Heart right ventricle (tissue), 16 donors: ENCODE measurements at regions of chr5 and their contacts with region 1.

Region 1: DNA sequence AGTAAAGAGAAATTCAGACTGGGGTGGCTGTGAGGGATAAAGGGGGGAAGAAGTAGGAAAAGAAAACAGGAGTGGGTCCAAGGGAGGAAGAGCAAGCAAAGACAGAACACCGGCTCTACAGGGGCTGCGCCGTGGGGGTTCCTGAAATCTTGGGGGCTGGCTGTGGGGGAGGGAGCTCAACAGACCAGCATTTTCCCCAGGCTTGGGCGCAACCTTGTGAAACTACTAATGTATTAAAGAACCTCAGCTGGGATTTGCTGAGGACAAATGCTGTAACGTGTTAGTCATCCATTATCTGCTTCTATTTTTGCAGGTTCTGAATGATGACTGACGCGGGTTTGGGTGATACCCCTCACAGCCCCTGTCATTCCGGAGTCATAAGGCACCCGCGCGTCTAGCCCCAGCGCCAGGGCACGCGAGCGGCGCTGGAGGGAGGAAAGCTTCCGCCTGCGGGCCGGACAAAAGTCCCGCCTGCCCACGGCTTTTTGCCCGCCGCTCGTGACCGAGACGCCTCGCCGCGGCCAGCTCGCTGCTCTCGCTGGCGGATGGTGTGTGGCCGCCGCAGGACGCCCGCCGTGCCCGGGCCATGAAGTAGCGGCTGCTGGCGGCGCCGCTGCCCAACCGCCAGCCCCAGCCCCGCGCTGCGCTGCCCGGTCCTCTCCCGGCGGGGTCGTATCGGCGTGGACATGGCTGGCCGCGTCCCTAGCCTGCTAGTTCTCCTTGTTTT is 110.6 kb downstream of the PAM start:
- DNase-seq: peak; percentile 78 to 83
- ATAC-seq: peak; percentile 89 to 98 (median 94)
- H3K4me3 ChIP-seq: peak overlapping the region; percentile 56 to 83 (median 72)
- H3K27ac ChIP-seq: peak overlapping the region; percentile 78 to 95 (median 91)
- H3K4me1 ChIP-seq: peaks cover 0 to 62% (median 25%) of the 10 kb centered on the region in 9 donors
- H3K27me3 ChIP-seq: no peaks in the 10 kb centered on the region
- CTCF ChIP-seq: peak in 1 of 9 donors; percentile 10

Region 2: GRCh38 chr5:102681407-102681983 is 184.2 kb before region 1 on chr5:
- intact Hi-C with region 1: no loop called
- DNase-seq: peak; percentile 35 to 69
- ATAC-seq: peak in 7 of 8 donors; percentile 73 to 90 (median 78)
- H3K4me3 ChIP-seq: no peak overlapping the region
- H3K27ac ChIP-seq: no peak overlapping the region
- H3K4me1 ChIP-seq: no peaks in the 10 kb centered on the region
- H3K27me3 ChIP-seq: no peaks in the 10 kb centered on the region
- CTCF ChIP-seq: peak; percentile 46 to 89 (median 83)

Region 3: DNA sequence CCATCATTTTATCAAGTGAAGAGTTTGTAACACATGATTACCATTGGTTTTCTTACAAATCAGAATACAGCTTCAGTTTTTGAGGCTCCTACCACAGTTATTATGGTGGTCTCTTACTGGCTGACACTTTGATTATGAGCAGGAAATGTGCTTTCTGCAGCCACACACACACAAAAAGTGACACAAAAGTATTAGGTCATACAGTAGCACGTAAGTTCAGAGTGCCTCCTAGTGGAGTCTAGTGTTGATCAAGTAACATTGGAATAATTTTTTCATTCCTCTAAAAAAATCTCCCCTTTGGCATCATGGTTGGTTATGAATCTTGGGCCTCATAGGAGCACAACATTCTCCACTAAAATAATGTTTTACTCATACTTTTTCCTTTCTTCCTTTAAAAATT is 73.0 kb before region 1 on chr5:
- intact Hi-C with region 1: loop called in 5 of 10 experiments (anchors 5 kb)
- DNase-seq: no peak
- ATAC-seq: no peak
- H3K4me3 ChIP-seq: no peak overlapping the region
- H3K27ac ChIP-seq: no peak overlapping the region
- H3K4me1 ChIP-seq: peaks cover 0 to 64% (median 37%) of the 10 kb centered on the region in 9 donors
- H3K27me3 ChIP-seq: no peaks in the 10 kb centered on the region
- CTCF ChIP-seq: peak in 7 of 9 donors; percentile 8 to 46 (median 28)

Region 4: GRCh38 chr5:102971697-102972293 is 106.1 kb after region 1 on chr5:
- intact Hi-C with region 1: loop called in 1 of 10 experiments (anchors 5 kb)
- DNase-seq: no peak
- ATAC-seq: peak in 6 of 8 donors; percentile 42 to 74 (median 51)
- H3K4me3 ChIP-seq: no peak overlapping the region
- H3K27ac ChIP-seq: no peak overlapping the region
- H3K4me1 ChIP-seq: peaks cover 0 to 16% (median 10%) of the 10 kb centered on the region in 9 donors
- H3K27me3 ChIP-seq: no peaks in the 10 kb centered on the region
- CTCF ChIP-seq: peak in 7 of 9 donors; percentile 36 to 72 (median 50)